Ascending aorta (tissue), 2 donors: ENCODE measurements at regions of chrX and their contacts with region 1.

Region 1: GRCh38 chrX:136028251-136028984 is 43.2 kb downstream of the SLC9A6 start:
- DNase-seq: no peak
- H3K4me3 ChIP-seq: no peak overlapping the region
- H3K27ac ChIP-seq: peak overlapping the region in 1 of 2 donors; percentile 86
- H3K4me1 ChIP-seq: peaks cover 2 to 34% of the 10 kb centered on the region in 2 donors
- H3K27me3 ChIP-seq: no peaks in the 10 kb centered on the region
- CTCF ChIP-seq: peak; percentile 58 to 77 (median 63)

Region 2: DNA sequence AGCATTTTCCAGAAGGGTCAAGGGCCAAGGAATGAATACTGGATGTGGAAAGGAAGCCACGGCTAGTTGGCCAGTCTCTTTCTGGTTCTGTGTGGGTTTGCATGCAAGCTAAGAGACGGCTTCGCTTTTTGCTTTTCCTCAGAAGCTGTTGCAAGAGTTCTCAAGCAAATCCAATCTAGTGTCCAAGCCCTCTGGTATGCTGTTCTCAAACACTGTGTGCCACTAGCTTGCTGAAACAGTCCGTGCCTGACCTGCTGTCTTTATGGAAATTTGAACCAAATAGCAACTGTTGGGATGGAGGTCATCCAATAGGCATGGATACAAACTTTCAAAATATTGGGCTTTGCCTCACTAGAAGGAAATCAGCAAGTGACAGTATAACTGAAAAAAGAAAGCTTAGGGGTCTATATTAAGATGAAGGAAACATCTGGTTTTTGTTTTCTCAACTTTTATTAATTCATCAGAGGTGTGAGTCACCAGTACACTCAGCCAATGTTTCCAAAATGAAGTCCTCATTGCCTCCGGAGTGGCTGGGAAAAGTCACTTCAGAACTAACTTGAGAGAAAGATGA is 27.3 kb after region 1 on chrX:
- intact Hi-C with region 1: loop called (anchors 2 kb)
- DNase-seq: peak; percentile 13 to 88
- H3K4me3 ChIP-seq: peak overlapping the region; percentile 25
- H3K27ac ChIP-seq: peak overlapping the region; percentile 91 to 94
- H3K4me1 ChIP-seq: peaks cover 0 to 39% of the 10 kb centered on the region in 2 donors
- H3K27me3 ChIP-seq: no peaks in the 10 kb centered on the region
- CTCF ChIP-seq: no peak

Region 3: GRCh38 chrX:136147315-136147901 is 119.0 kb after region 1 on chrX and contains the start of gene FHL1:
- intact Hi-C with region 1: loop called (anchors 5 kb)
- DNase-seq: peak in 1 of 2 donors; percentile 83
- H3K4me3 ChIP-seq: peak within 1 kb of the TSS; percentile 72 to 92
- H3K27ac ChIP-seq: peak within 1 kb of the TSS; percentile 94 to 97
- H3K4me1 ChIP-seq: no peaks in the 10 kb centered on the region
- H3K27me3 ChIP-seq: no peaks in the 10 kb centered on the region
- CTCF ChIP-seq: no peak
- total RNA-seq, gene FHL1: 850 TPM

Region 4: GRCh38 chrX:136209016-136209738 is 180.8 kb after region 1 on chrX:
- intact Hi-C with region 1: loop called (anchors 2 kb)
- DNase-seq: peak in 1 of 2 donors; percentile 77
- H3K4me3 ChIP-seq: peak overlapping the region; percentile 20 to 21
- H3K27ac ChIP-seq: peak overlapping the region; percentile 60 to 62
- H3K4me1 ChIP-seq: peaks cover 12 to 32% of the 10 kb centered on the region in 2 donors
- H3K27me3 ChIP-seq: no peaks in the 10 kb centered on the region
- CTCF ChIP-seq: peak; percentile 36 to 59 (median 58)

Region 5: DNA sequence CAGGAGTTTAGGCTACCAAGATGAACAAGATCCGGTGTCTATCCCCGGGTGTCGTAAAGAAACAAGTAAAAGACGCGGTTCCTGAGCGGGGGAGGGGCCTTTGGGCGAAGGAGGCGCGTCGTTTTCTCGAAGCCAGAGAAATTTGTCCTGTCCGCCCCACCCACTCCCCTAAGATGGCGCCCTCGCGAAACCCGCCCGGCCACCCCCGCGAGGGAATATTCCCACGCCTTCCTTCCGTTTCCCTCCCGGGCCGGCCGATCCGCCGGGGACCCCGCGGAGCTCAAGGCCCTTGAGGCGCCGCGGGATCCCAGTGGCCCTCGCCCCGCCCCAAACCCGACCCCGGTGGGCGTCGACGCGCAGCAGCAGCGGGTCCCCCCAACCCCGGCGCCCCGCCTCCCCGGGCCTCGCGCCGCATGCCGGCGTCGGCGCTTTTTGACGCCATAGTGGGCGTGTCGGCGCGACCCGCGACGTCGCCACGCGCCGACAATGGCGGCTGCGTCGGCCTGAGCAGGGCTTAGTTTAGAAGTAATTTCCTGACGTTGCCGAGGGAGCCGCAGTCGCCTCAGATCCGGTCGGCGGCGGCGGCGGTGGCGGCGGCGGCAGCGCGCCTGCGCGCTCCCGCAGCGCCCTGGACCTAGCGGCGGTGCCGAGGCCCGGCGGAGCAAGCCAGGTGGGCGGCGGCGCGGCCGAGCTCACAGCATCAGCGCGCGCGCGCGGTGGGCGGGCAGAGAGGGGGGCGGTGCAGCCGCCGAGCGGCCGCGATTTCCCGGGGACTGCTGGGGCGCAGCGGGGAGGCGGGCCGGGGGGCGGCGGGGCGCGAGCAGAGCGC is 468.6 kb after region 1 on chrX and contains the start of gene HTATSF1:
- intact Hi-C with region 1: loop called (anchors 5 kb)
- DNase-seq: peak; percentile 49 to 93
- H3K4me3 ChIP-seq: peak within 1 kb of the TSS; percentile 58 to 75
- H3K27ac ChIP-seq: peak within 1 kb of the TSS; percentile 86 to 93
- H3K4me1 ChIP-seq: no peaks in the 10 kb centered on the region
- H3K27me3 ChIP-seq: peaks cover 3% of the 10 kb centered on the region
- CTCF ChIP-seq: peak in 1 of 3 experiments; percentile 3
- total RNA-seq, gene HTATSF1: 3.7 TPM